HEK293T (cell line): ENCODE measurements at regions of chr2 and their contacts with region 1.

Region 1: DNA sequence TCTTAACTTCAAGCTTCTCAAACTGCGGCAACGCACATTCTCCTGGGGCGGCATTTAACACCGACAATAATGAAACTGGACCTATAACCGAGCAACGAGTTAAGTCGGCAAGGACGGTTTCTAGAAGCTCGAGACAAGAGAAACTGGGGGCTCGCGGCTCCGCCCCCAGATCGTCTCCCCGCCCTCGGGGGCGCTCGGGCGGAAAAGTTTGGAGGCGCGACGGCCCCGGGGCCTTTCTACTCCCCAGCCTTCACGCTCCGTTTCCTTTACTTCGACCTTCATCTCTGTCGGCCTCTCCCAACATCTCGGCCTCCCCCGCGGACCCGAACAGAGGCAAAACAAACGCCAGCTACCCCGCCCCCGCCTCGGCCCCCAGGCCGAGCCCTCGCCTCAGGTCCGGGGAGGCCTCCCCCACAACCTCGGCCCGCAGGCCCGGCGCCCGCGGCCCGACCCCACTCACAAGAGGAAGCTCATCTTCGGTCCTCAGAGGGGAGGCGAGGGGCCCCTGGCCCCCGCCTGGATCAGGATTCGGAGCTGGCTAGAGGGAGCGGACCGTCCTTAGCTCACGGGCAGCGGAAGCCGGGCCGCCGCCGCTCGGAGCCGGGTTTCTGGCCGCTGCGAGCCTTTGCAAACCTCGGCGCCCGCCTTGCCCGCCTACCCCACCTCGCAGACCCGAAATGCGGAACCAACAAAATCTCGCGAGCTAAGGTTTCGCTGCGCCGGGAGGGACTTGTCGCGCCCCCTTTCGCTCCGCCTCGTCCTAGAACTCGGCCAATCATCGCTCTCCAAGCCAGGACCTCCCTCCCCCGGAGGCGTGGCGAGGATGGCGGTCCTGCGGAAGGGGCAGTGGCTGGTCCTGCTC is at the start of gene MOB1A:
- DNase-seq: peak; percentile 97

Region 2: GRCh38 chr2:74147727-74148456 is 30.5 kb before region 1 on chr2 and contains the start of gene BOLA3:
- CTCF ChIA-PET with region 1: no interaction called
- POLR2A ChIA-PET with region 1: interaction called, 14 read pairs
- DNase-seq: peak; percentile 93

Region 3: DNA sequence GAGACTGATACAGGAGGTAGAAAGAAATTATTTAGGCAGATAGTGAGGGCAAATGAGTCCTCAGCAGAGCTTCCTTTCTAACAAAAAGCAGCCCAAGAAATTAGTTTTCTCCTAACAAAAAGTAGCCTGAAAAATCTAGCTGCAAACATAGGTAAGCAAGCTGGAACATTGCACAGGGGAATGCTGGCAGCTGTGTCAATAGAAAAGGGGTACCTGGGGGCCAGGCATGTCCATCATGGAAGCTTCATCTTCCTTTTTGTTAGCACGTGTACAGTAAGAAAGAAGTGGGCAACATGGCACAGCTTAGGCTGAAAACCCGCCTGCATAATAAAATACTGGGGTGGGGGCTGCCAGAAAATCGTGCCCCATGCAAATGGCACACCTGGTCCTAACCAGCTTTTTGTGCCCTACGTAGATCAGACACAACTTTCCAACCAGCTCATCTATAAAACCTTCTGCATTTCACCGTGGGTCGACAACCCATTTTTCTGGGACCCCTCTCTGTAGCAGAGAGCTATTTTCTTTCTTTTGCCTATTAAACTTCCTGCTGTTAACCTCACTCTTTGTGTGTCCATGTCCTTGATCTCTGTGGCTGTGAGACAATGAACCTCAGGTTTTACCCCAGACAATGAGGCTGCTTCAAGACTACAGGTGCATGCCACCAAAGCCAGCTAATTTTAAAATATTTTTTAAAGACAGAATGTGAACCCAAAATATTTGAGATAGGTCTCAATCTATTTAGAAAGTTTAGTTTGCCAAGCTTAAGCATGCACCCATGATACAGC is 13.4 kb after region 1 on chr2:
- CTCF ChIA-PET with region 1: interaction called, 8 read pairs
- POLR2A ChIA-PET with region 1: interaction called, 12 read pairs
- DNase-seq: no peak

Region 4: GRCh38 chr2:74198461-74199274 is 20.2 kb after region 1 on chr2 and contains the start of gene MTHFD2:
- CTCF ChIA-PET with region 1: interaction called, 4 read pairs
- POLR2A ChIA-PET with region 1: interaction called, 36 read pairs
- DNase-seq: peak; percentile 93